Breast epithelium (tissue), 4 donors: ENCODE measurements at regions of chrX and their contacts with region 1.

Region 1: GRCh38 chrX:50881028-50881427 is 29.5 kb upstream of the BMP15 start:
- DNase-seq: no peak
- H3K4me3 ChIP-seq: no peak overlapping the region
- H3K27ac ChIP-seq: no peak overlapping the region
- H3K4me1 ChIP-seq: no peaks in the 10 kb centered on the region
- H3K27me3 ChIP-seq: peaks cover 0 to 21% of the 10 kb centered on the region in 2 donors
- CTCF ChIP-seq: no peak
- POLR2A ChIP-seq: no peak

Region 2: GRCh38 chrX:50827991-50828390 is 53.0 kb before region 1 on chrX:
- intact Hi-C with region 1: loop called (anchors 2 kb)
- DNase-seq: no peak
- H3K4me3 ChIP-seq: no peak overlapping the region
- H3K27ac ChIP-seq: no peak overlapping the region
- H3K4me1 ChIP-seq: no peaks in the 10 kb centered on the region
- H3K27me3 ChIP-seq: peaks cover 0 to 44% of the 10 kb centered on the region in 2 donors
- CTCF ChIP-seq: no peak
- POLR2A ChIP-seq: no peak

Region 3: DNA sequence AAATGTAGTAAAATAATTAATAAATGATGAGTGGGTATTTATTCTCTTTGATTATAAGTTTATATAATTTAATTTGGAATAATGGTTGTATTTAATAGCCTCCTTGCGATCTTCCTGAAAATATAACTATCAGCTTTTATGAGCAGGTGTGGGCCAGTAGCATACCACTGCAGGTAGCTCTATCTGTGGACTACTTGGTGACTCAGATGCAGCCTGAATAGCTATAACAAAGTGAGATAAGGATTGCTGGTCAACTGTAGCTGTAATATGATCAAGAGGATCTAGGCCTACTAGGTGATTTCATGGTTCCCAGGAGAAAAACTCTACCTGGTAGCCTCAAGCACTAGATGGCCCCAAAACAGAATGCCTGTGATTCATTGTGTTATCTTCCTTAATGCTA is 17.6 kb before region 1 on chrX:
- intact Hi-C with region 1: no loop called
- DNase-seq: no peak
- H3K4me3 ChIP-seq: no peak overlapping the region
- H3K27ac ChIP-seq: no peak overlapping the region
- H3K4me1 ChIP-seq: no peaks in the 10 kb centered on the region
- H3K27me3 ChIP-seq: peaks cover 0 to 45% of the 10 kb centered on the region in 2 donors
- CTCF ChIP-seq: no peak
- POLR2A ChIP-seq: no peak